AG04449 (cell line): ENCODE measurements at regions of chr3 and their contacts with region 1.

Region 1: GRCh38 chr3:170811928-170812591 is 57.9 kb downstream of the RPL22L1 start:
- DNase-seq: peak; percentile 47
- H3K4me3 ChIP-seq: no peak overlapping the region
- CTCF ChIP-seq: peak; percentile 75

Region 2: DNA sequence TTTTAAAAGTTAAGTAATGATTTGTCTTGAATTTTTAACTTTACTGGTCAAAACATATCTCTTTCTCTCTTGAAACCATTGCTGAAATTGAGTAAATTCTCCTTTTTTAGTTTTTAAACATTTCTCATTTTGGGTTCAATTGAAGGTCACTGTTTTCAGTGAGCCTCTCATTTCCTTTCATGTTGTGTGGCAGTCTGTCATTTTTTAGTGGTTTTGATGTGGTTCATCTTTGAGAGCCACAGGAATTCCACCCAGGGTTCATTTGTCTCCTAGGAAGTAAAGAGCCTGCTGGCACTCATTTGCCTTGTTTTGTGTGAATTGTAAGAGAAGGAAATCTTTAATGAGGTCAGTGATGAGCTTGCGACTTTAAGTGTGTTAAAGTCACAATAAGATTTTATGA is 383.0 kb before region 1 on chr3:
- CTCF ChIA-PET with region 1: interaction called, 47 read pairs
- POLR2A ChIA-PET with region 1: interaction called, 3 read pairs
- DNase-seq: no peak
- H3K4me3 ChIP-seq: no peak overlapping the region
- CTCF ChIP-seq: no peak

Region 3: DNA sequence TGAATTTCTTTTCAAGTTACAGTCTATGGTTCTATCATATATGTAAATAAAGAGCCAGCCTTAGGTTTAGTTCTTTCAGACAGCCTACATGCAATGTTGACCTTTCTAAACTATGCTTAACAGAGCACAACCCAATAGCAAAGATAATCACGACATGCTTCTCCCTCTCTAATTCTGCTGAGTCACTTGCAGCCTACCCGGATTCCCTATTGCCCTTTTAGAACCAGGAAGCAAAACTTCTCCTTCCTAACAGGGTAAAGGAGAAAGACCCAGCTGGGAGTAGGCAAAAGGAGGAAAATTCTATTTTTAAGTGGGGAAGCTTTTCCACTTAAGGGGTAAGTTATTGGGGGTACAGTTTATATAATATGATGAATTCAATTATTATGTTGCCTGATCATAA is 305.5 kb before region 1 on chr3:
- CTCF ChIA-PET with region 1: interaction called, 43 read pairs
- POLR2A ChIA-PET with region 1: no interaction called
- DNase-seq: no peak
- H3K4me3 ChIP-seq: no peak overlapping the region
- CTCF ChIP-seq: no peak

Region 4: DNA sequence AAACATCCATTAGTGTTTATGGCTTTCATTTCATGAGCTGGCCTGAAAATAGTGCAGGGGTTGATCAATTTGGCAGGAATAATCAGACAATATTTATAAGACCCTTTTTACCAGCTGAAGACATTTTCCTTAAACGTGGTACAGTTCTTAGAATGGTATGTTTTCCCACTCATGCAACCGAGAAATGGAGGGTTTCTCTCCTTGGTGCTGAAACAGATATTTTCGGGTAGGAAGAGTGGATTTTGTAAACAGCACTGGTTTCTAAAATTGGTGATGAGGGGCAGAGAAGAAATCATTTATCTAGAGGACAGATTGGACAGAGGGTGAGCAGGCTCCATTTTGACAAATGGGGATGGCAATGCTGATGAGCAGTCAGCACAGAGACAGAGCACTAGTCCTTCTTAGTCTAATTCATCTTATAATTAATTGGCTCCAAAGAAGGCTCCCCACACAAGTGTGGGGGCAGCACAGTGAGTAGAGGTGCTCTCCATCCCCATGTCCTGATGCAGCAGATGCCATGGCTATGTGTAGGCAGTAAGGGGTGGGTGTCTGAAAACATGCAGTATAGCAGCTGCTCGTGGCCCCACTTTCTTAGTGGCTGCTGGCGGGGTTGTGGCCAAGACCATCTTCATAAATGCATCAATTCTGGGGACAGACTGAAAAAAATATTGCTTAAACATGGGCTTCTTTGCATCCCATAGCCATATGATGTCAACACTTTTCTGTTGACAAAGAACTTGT is 208.1 kb before region 1 on chr3:
- CTCF ChIA-PET with region 1: interaction called, 23 read pairs
- POLR2A ChIA-PET with region 1: no interaction called
- DNase-seq: no peak
- H3K4me3 ChIP-seq: no peak overlapping the region
- CTCF ChIP-seq: no peak

Region 5: DNA sequence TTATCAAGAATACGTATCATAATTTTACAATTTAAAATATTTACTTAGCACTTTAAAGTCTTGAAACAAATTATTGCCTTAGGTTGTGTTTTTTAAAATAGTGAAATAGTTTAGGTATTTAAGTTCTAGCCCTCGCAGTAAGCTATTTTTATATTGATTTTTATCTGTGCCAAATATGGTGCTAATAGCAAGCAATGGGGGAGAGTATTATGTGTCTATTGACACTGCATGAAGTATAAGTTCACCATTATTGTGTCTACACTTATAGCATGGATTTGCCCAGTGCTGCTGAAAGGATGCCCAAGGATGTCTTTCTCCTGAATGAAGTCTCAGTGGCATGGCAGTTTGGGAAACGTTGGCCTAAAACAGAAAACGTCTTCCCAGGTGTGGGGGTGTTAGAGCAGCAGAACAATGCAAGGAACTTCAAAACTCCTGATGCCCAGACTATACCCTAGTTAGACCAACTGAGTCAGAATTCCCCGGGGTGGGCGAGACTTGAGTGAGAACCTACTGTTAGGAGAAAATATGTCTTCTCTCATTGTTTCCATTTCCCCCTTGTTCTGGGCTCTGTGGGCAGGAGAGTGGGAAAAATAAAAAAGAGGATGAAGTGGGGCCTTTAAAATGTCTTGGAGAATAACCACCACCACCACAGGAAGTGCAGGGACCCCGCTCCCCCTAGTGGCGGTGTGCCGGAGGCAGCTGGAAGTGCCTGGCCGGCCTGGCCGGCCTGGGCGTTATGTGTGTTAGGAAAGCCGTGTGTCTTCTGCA is 122.0 kb before region 1 on chr3:
- CTCF ChIA-PET with region 1: interaction called, 57 read pairs
- POLR2A ChIA-PET with region 1: no interaction called
- DNase-seq: no peak
- H3K4me3 ChIP-seq: no peak overlapping the region
- CTCF ChIP-seq: peak; percentile 74

Region 6: GRCh38 chr3:170740726-170741591 is 71.1 kb before region 1 on chr3:
- CTCF ChIA-PET with region 1: interaction called, 34 read pairs
- POLR2A ChIA-PET with region 1: interaction called, 3 read pairs
- DNase-seq: no peak
- H3K4me3 ChIP-seq: no peak overlapping the region; the same call in 1 of the 2 replicates
- CTCF ChIP-seq: no peak

Region 7: GRCh38 chr3:170835336-170835735 is 23.3 kb after region 1 on chr3:
- CTCF ChIA-PET with region 1: interaction called, 100 read pairs
- POLR2A ChIA-PET with region 1: no interaction called
- DNase-seq: no peak
- H3K4me3 ChIP-seq: no peak overlapping the region
- CTCF ChIP-seq: no peak

Region 8: DNA sequence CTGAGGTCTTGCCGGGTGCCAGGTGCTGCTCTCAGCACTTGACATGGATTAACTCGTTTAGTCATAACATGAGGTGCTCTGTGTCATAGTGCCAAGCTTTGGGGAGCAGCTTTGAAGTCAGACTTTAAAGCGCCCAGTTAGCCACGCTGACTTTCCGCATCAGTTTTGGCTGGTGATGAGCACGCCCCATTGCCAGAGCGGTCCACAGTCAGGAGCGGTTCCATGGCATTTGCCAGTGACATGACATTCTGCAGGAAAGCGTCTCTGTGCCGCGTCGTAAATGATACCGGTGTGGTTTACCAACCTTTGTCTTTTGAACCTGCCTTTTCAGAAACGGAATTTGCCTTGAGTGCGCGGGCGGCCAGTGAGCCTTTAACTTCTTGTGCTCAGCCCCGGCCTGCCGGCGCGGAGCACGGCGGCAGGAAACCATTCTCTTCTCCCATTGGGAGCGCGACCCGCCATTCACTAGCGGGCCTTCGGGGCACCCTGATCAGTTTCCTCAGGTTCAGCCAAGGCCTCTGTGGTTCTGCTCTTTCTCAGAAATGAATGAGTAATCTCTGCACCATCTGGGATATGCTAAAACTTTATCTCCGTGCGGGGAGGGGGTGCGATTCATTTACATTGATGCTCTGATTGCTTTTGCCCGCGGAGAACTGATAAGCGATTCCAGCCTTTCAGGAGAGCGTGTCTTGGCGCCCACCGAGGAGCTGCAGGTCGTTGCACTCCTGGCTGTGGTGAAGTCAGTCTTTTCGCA is 216.1 kb after region 1 on chr3:
- CTCF ChIA-PET with region 1: no interaction called
- POLR2A ChIA-PET with region 1: no interaction called
- DNase-seq: peak; percentile 72
- H3K4me3 ChIP-seq: peak overlapping the region; percentile 49
- CTCF ChIP-seq: no peak